ENCODE measurements at regions of chr2 and their contacts with region 1.

Region 1: DNA sequence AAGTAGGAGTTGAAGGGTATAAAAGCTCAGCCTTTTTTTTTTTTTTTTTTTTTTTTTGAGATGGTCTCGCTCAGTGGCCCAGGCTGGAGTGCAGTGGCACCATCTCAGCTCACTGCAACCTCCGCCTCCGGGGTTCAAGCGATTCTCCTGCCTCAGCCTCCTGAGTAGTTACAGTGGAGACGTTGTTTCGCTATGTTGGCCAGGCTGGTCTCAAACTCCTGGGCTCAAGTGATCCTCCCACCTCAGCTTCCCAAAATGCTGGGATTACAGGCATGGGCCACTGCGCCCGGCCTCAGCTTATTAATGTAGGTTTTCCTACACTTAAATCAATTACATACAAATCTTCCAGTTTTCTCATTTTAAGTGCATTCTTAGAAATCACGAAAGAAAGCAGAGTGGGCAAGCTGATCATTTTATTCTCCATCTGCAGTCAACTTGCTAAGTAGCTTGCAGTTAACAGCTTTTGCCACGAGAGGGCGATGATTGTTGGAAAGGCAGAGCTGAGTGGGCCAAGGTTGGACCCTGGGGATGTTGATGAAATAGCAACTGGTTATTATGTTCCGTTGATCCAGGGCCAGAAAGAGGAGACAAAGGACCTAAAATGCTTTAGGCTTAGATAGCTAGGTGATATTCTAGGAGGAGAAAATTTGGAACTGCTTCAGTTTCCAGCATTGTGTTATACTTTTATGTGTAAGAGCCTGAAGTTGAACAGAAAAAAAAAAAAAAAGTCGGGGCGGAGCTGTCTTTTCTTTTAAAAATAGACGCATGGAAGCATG is 234.4 kb upstream of the EPAS1 start:
- DNase-seq: peak; percentile 91
- H3K4me3 ChIP-seq: no peak overlapping the region
- H3K27ac ChIP-seq: peak overlapping the region; percentile 10
- H3K4me1 ChIP-seq: peaks cover 38% of the 10 kb centered on the region
- H3K27me3 ChIP-seq: no peaks in the 10 kb centered on the region
- CTCF ChIP-seq: peak; percentile 83 to 93
- POLR2A ChIP-seq: no peak

Region 2: GRCh38 chr2:45892757-45893156 is 170.1 kb before region 1 on chr2:
- CTCF ChIA-PET with region 1: no interaction called
- POLR2A ChIA-PET with region 1: no interaction called
- dilution Hi-C with region 1: no loop called
- intact Hi-C with region 1: no loop called
- DNase-seq: no peak
- H3K4me3 ChIP-seq: no peak overlapping the region
- H3K27ac ChIP-seq: no peak overlapping the region
- H3K4me1 ChIP-seq: no peaks in the 10 kb centered on the region
- H3K27me3 ChIP-seq: no peaks in the 10 kb centered on the region
- CTCF ChIP-seq: no peak
- POLR2A ChIP-seq: no peak

Region 3: GRCh38 chr2:46023165-46023854 is 39.5 kb before region 1 on chr2:
- CTCF ChIA-PET with region 1: no interaction called
- POLR2A ChIA-PET with region 1: no interaction called
- dilution Hi-C with region 1: no loop called
- intact Hi-C with region 1: no loop called
- DNase-seq: no peak
- H3K4me3 ChIP-seq: no peak overlapping the region
- H3K27ac ChIP-seq: no peak overlapping the region
- H3K4me1 ChIP-seq: peaks cover 9% of the 10 kb centered on the region
- H3K27me3 ChIP-seq: no peaks in the 10 kb centered on the region
- CTCF ChIP-seq: no peak
- POLR2A ChIP-seq: no peak

Region 4: DNA sequence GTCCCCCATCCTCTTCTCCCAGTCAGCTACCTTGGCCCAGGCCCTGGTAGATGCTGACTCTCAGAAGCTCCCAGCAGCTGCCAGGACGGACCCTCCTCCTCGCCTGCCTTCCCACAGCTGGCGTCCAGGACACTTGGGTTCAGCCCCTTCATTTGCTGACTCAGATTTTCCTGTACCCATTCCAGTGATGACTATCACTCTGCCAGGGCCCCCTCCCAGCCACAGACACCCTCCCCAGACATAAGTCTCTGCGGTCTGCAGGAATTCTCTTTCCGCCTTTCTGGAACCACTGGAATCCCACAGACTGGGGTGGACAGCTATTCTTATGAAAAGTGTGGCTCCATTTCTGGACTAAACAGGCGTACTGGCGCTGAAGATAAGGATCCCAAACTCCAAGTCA is 25.9 kb before region 1 on chr2:
- CTCF ChIA-PET with region 1: interaction called, 10 read pairs
- POLR2A ChIA-PET with region 1: interaction called, 3 read pairs
- dilution Hi-C with region 1: no loop called
- intact Hi-C with region 1: no loop called
- DNase-seq: no peak
- H3K4me3 ChIP-seq: no peak overlapping the region
- H3K27ac ChIP-seq: no peak overlapping the region
- H3K4me1 ChIP-seq: peaks cover 12% of the 10 kb centered on the region
- H3K27me3 ChIP-seq: no peaks in the 10 kb centered on the region
- CTCF ChIP-seq: no peak
- POLR2A ChIP-seq: no peak

Region 5: GRCh38 chr2:46117379-46117778 is 54.6 kb after region 1 on chr2:
- CTCF ChIA-PET with region 1: interaction called, 17 read pairs
- POLR2A ChIA-PET with region 1: no interaction called
- dilution Hi-C with region 1: no loop called
- intact Hi-C with region 1: loop called (anchors 1 kb)
- DNase-seq: peak; percentile 52
- H3K4me3 ChIP-seq: no peak overlapping the region
- H3K27ac ChIP-seq: peak overlapping the region; percentile 78
- H3K4me1 ChIP-seq: peaks cover 51% of the 10 kb centered on the region
- H3K27me3 ChIP-seq: no peaks in the 10 kb centered on the region
- CTCF ChIP-seq: no peak
- POLR2A ChIP-seq: no peak

Region 6: GRCh38 chr2:46200220-46200621 is 137.4 kb after region 1 on chr2:
- CTCF ChIA-PET with region 1: no interaction called
- POLR2A ChIA-PET with region 1: no interaction called
- dilution Hi-C with region 1: no loop called
- intact Hi-C with region 1: loop called (anchors 1 kb)
- DNase-seq: peak; percentile 86
- H3K4me3 ChIP-seq: no peak overlapping the region
- H3K27ac ChIP-seq: peak overlapping the region; percentile 22
- H3K4me1 ChIP-seq: peaks cover 34% of the 10 kb centered on the region
- H3K27me3 ChIP-seq: no peaks in the 10 kb centered on the region
- CTCF ChIP-seq: no peak
- POLR2A ChIP-seq: no peak

Region 7: GRCh38 chr2:46296840-46297545 is 234.2 kb after region 1 on chr2 and contains the start of gene EPAS1:
- CTCF ChIA-PET with region 1: interaction called, 44 read pairs
- POLR2A ChIA-PET with region 1: interaction called, 19 read pairs
- dilution Hi-C with region 1: no loop called
- intact Hi-C with region 1: loop called (anchors 1 kb)
- DNase-seq: peak; percentile 93
- H3K4me3 ChIP-seq: peak within 1 kb of the TSS; percentile 64 to 86 (median 66)
- H3K27ac ChIP-seq: peak within 1 kb of the TSS; percentile 81
- H3K4me1 ChIP-seq: peaks cover 23% of the 10 kb centered on the region
- H3K27me3 ChIP-seq: no peaks in the 10 kb centered on the region
- CTCF ChIP-seq: no peak
- POLR2A ChIP-seq: peak; percentile 97
- total RNA-seq, gene EPAS1: 374 and 397 TPM in 2 replicates

Region 8: GRCh38 chr2:46461011-46461674 is 398.3 kb after region 1 on chr2:
- CTCF ChIA-PET with region 1: interaction called, 11 read pairs
- POLR2A ChIA-PET with region 1: no interaction called
- dilution Hi-C with region 1: no loop called
- intact Hi-C with region 1: no loop called
- DNase-seq: peak; percentile 72
- H3K4me3 ChIP-seq: no peak overlapping the region
- H3K27ac ChIP-seq: no peak overlapping the region
- H3K4me1 ChIP-seq: no peaks in the 10 kb centered on the region
- H3K27me3 ChIP-seq: no peaks in the 10 kb centered on the region
- CTCF ChIP-seq: peak; percentile 93
- POLR2A ChIP-seq: no peak

Measured in endothelial cell of umbilical vein (primary cell).